ENCODE measurements at regions of chr1 and their contacts with region 1.

Region 1: GRCh38 chr1:207885129-207886032 is 25.5 kb downstream of the CD34 start:
- DNase-seq: peak; percentile 75 to 87 (median 86)
- H3K4me3 ChIP-seq: no peak overlapping the region
- H3K27ac ChIP-seq: no peak overlapping the region
- H3K4me1 ChIP-seq: peaks cover 7 to 77% (median 64%) of the 10 kb centered on the region in 4 experiments
- H3K27me3 ChIP-seq: no peaks in the 10 kb centered on the region

Region 2: GRCh38 chr1:207514890-207515289 is 370.5 kb before region 1 on chr1:
- CTCF ChIA-PET with region 1: no interaction called
- POLR2A ChIA-PET with region 1: no interaction called
- DNase-seq: no peak
- H3K4me3 ChIP-seq: no peak overlapping the region
- H3K27ac ChIP-seq: no peak overlapping the region
- H3K4me1 ChIP-seq: no peaks in the 10 kb centered on the region
- H3K27me3 ChIP-seq: no peaks in the 10 kb centered on the region

Region 3: GRCh38 chr1:207822124-207822601 is 63.2 kb before region 1 on chr1:
- CTCF ChIA-PET with region 1: interaction called, 145 read pairs
- POLR2A ChIA-PET with region 1: no interaction called
- DNase-seq: no peak
- H3K4me3 ChIP-seq: peak overlapping the region in 4 of 7 experiments; percentile 49 to 82 (median 65)
- H3K27ac ChIP-seq: peak overlapping the region in 1 of 2 experiments; percentile 62
- H3K4me1 ChIP-seq: peaks cover 26 to 64% (median 45%) of the 10 kb centered on the region in 4 experiments
- H3K27me3 ChIP-seq: no peaks in the 10 kb centered on the region

Region 4: GRCh38 chr1:207868774-207869721 is 16.3 kb before region 1 on chr1:
- CTCF ChIA-PET with region 1: interaction called, 202 read pairs
- POLR2A ChIA-PET with region 1: interaction called, 3 read pairs
- DNase-seq: peak; percentile 65 to 77 (median 73)
- H3K4me3 ChIP-seq: peak overlapping the region; percentile 70 to 91 (median 86)
- H3K27ac ChIP-seq: peak overlapping the region; percentile 42 to 76
- H3K4me1 ChIP-seq: peaks cover 17 to 94% (median 82%) of the 10 kb centered on the region in 4 experiments
- H3K27me3 ChIP-seq: no peaks in the 10 kb centered on the region

Region 5: GRCh38 chr1:207910591-207911354 is 25.4 kb after region 1 on chr1 and contains the start of gene CD34:
- CTCF ChIA-PET with region 1: interaction called, 157 read pairs
- POLR2A ChIA-PET with region 1: no interaction called
- DNase-seq: peak in 2 of 3 donors; percentile 63 to 77
- H3K4me3 ChIP-seq: peak within 1 kb of the TSS; percentile 76 to 90 (median 81)
- H3K27ac ChIP-seq: peak within 1 kb of the TSS; percentile 78 to 85
- H3K4me1 ChIP-seq: peaks cover 41 to 87% (median 73%) of the 10 kb centered on the region in 4 experiments
- H3K27me3 ChIP-seq: no peaks in the 10 kb centered on the region

Region 6: DNA sequence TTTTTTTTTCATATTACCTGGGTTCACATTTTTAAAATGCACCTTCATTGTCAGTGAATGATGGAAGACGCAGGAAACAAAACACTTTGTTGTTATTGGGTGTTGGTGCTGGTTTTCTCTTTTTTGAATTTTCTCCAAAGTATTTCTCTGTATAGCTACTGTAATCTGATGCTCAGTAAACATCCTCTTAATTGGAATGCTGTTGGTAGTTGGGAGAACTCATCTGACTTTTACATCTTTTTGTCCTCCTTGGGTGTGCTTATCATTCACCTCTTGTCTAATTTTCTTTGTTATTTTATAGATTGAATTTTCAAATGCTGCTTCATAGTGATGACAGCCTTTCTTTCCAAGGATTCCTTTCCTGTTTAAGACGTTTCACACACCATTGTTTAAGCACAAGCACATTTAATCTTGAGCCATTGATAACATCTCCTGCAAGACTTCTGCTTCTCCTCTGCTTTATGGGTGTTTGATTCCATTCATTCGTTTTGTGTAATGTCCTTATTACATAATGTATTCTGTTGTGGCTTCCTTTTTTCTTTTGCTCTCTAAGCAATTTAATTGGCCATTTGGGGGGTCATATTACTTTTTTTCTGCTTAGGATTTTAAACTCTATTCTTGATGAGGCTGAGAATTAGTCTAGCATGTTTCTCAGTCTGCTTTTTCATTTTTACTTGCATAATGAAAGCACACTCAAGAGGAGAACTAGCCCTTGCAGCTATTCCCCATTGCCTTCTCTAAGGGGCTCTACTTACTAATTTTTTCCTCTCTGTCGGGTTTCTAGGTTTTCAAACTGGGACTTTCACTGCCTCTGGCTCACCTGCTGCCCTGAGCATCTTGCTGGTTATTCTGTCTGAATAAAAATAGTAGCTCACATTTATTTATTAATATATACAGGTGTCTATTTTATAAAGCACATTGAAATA is 67.5 kb after region 1 on chr1:
- CTCF ChIA-PET with region 1: interaction called, 494 read pairs
- POLR2A ChIA-PET with region 1: no interaction called
- DNase-seq: no peak
- H3K4me3 ChIP-seq: no peak overlapping the region
- H3K27ac ChIP-seq: no peak overlapping the region
- H3K4me1 ChIP-seq: peaks cover 0 to 26% (median 13%) of the 10 kb centered on the region in 4 experiments
- H3K27me3 ChIP-seq: no peaks in the 10 kb centered on the region

Measured in common myeloid progenitor, CD34-positive (primary cell).